ENCODE measurements at regions of chr22 and their contacts with region 1.

Region 1: GRCh38 chr22:36180038-36180880 is 19.7 kb upstream of the APOL3 start:
- DNase-seq: peak; percentile 91
- ATAC-seq: peak; percentile 98
- H3K4me3 ChIP-seq: no peak overlapping the region
- H3K27ac ChIP-seq: no peak overlapping the region
- H3K4me1 ChIP-seq: no peaks in the 10 kb centered on the region
- H3K27me3 ChIP-seq: no peaks in the 10 kb centered on the region
- CTCF ChIP-seq: peak; percentile 94

Region 2: DNA sequence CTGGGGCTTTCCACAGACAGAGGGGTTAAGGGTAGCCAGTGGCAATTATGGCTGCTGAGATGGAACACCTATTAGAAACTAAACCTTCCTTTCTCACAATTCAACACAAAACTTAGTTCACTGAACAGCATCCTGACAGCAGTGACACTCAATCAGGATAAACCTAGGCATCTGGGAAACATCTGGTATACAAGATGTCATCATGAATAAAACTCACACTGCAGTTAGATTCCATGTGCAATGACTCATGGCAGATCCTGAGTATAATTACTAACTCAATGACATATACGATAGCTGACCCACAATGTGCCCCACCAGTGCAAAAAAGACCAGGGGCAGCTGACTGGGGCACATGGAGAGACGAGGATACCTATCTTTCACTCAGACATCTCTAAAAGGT is 169.4 kb before region 1 on chr22:
- intact Hi-C with region 1: no loop called
- DNase-seq: no peak
- ATAC-seq: no peak
- H3K4me3 ChIP-seq: no peak overlapping the region
- H3K27ac ChIP-seq: no peak overlapping the region
- H3K4me1 ChIP-seq: peaks cover 32% of the 10 kb centered on the region
- H3K27me3 ChIP-seq: no peaks in the 10 kb centered on the region
- CTCF ChIP-seq: no peak

Region 3: DNA sequence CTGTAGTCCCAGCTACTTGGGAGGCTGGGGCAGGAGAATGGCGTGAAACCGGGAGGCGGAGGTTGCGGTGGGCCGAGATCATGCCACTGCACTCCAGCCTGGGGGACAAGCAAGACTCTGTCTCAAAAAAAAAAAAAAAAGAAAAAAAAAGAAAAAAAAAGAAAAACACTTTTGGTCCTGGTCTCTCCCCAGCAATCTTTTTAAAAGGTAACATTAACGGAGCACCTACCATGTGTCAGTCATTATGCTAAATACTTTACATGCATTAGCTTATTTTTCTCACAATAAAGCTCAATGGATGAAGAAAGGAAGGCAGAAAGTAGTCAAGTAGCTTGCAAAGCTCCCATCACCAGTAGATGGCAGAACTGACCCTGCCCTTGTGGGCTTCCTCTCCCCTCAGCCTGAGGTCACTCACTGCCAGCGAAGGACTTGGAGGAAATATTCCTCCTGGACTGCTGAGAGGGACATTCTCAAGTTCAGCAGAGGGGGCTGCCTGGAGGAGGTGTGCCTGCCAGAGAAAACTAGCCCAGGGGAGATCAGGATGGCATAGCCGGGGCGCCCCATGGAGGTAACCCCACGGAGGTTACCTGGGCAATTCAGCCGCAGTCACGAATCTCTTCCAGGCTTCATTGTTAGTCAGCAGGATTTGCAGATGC is 35.2 kb before region 1 on chr22:
- intact Hi-C with region 1: loop called (anchors 5 kb)
- DNase-seq: no peak
- ATAC-seq: peak; percentile 92
- H3K4me3 ChIP-seq: no peak overlapping the region
- H3K27ac ChIP-seq: no peak overlapping the region
- H3K4me1 ChIP-seq: peaks cover 13% of the 10 kb centered on the region
- H3K27me3 ChIP-seq: no peaks in the 10 kb centered on the region
- CTCF ChIP-seq: peak; percentile 78

Measured in upper lobe of right lung (tissue), 1 donor.